HAP-1 (cell line): ENCODE measurements at regions of chr12 and their contacts with region 1.

Region 1: GRCh38 chr12:32755654-32756475 is at the start of gene YARS2:
- DNase-seq: peak; percentile 96 to 98
- H3K4me3 ChIP-seq: peak within 1 kb of the TSS; percentile 96
- H3K4me1 ChIP-seq: peaks cover 12% of the 10 kb centered on the region
- H3K27me3 ChIP-seq: peaks cover 5% of the 10 kb centered on the region; the same call in 1 of the 2 replicates

Region 2: DNA sequence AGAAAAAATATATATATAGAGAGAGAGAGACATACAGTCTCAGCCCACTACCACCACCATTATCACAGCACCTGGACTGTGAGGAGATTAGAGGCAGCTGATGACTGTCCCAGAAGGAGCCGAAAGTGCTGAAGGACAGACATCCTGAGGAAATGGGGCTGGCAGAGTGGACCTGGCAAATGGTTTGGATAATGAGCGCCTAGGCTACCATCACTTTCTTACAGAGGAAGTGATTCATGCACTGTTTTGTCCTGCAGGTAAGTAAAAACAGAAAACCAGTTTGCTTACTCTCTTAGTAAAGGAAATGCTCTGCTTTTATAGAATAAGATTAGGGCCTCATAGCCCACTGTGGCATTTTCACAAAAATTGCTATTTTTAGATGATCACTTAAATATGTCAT is 105.4 kb before region 1 on chr12:
- in situ Hi-C with region 1: no loop called
- DNase-seq: no peak
- H3K4me3 ChIP-seq: no peak overlapping the region
- H3K4me1 ChIP-seq: no peaks in the 10 kb centered on the region
- H3K27me3 ChIP-seq: no peaks in the 10 kb centered on the region

Region 3: DNA sequence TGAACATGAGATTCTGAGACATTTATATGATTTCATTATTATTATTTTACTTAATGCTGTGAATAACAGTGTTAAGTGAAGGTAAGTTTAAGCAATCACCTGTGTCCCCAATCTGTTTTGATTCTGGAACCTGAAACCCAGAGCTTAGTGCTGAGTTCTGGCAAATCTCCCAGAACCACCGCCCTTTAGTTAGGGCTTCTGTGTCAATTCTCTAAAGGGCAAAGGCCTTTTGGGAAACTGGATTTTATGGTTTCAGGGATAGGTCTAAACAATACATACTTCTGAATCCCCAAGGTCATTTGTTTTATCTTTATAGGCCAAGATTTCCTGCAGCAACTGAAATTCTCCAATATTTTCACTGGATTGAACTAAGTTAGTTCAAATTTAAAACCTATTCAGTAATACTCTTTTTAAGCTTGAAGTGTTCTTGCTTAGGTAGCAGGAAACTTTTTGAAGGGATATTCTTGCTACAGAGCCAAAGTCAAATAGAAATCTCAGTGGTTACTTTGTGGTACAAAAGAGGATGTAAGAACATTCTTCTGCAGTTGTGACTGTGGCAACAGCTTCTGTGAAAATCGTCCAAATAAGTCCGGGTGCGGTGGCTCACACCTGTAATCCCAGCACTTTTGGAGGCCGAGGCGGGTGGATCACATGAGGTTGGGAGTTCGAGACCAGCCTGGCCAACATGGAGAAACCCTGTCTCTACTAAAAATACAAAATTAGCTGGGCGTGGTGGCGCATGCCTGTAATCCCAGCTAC is 150.7 kb after region 1 on chr12:
- in situ Hi-C with region 1: loop called (anchors 10 kb)
- DNase-seq: peak; percentile 30 to 43
- H3K4me3 ChIP-seq: no peak overlapping the region
- H3K4me1 ChIP-seq: peaks cover 10% of the 10 kb centered on the region
- H3K27me3 ChIP-seq: no peaks in the 10 kb centered on the region

Region 4: GRCh38 chr12:33605751-33606150 is 849.9 kb after region 1 on chr12:
- in situ Hi-C with region 1: loop called (anchors 25 kb)
- DNase-seq: peak in 1 of 2 experiments; percentile 49
- H3K4me3 ChIP-seq: no peak overlapping the region
- H3K4me1 ChIP-seq: no peaks in the 10 kb centered on the region
- H3K27me3 ChIP-seq: no peaks in the 10 kb centered on the region

Region 5: GRCh38 chr12:34022079-34022830 is 1266.4 kb after region 1 on chr12 and contains the start of gene ALG10:
- in situ Hi-C with region 1: loop called (anchors 5 kb)
- DNase-seq: peak; percentile 82 to 97
- H3K4me3 ChIP-seq: peak within 1 kb of the TSS; percentile 77
- H3K4me1 ChIP-seq: peaks cover 5% of the 10 kb centered on the region; the same call in 1 of the 2 replicates
- H3K27me3 ChIP-seq: no peaks in the 10 kb centered on the region